ENCODE measurements at regions of chr7 and their contacts with region 1.

Region 1: DNA sequence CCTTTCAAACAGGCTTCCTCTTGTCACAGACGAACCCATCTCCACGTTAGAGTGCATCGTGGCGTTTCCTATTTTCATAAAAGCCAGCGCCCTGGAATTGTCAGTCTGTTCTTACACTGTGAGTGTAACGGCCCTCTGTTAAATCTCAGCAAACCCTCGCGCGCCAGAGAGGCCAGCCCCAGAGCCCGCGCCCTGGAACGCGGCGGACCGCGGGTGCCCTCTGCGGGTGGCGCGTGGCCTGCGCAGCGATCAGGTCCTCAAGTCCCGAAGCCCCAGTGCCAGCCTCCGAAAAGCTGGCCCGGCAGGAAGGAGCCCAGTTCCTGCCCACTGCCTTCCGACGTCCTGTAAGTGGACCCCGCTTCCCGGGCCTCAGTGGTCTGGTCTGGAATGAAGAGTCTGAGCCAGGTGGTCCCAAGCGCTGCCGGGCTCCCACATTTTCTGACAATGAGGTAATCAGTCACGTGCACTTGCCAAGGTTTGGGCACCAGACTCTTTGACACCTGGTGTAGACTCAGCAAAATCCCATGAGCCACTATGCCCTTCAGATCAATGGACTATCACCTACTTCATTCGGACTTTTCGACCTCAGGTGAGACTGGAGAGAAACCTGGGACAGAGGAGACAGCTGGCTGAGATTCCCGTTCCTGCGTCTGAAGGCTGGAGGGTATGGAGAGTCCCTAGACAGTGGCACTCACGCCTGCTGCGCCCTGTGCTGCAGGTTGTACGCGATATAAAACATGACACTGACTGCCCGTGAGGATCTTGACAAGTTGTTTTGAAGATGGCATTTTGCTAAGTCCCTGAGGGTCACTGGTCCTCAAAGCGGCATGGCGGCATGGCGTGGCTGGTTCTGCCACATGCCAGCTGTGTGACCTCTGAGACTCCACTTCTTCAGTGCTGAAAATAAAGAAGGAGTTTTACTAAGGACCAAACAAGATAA is 109.4 kb upstream of the LANCL2 start:
- DNase-seq: peak; percentile 76
- H3K4me3 ChIP-seq: peak overlapping the region; percentile 23 to 75 (median 39)
- H3K27ac ChIP-seq: no peak overlapping the region
- H3K4me1 ChIP-seq: peaks cover 9% of the 10 kb centered on the region
- H3K27me3 ChIP-seq: peaks cover 44 to 53% of the 10 kb centered on the region in 2 experiments
- CTCF ChIP-seq: peak; percentile 92 to 97
- POLR2A ChIP-seq: no peak

Region 2: GRCh38 chr7:54798569-54798968 is 457.2 kb before region 1 on chr7:
- CTCF ChIA-PET with region 1: interaction called, 17 read pairs
- POLR2A ChIA-PET with region 1: no interaction called
- dilution Hi-C with region 1: no loop called
- intact Hi-C with region 1: no loop called
- DNase-seq: no peak
- H3K4me3 ChIP-seq: no peak overlapping the region
- H3K27ac ChIP-seq: no peak overlapping the region
- H3K4me1 ChIP-seq: no peaks in the 10 kb centered on the region
- H3K27me3 ChIP-seq: peaks cover 13 to 43% of the 10 kb centered on the region in 2 experiments
- CTCF ChIP-seq: no peak
- POLR2A ChIP-seq: no peak

Region 3: DNA sequence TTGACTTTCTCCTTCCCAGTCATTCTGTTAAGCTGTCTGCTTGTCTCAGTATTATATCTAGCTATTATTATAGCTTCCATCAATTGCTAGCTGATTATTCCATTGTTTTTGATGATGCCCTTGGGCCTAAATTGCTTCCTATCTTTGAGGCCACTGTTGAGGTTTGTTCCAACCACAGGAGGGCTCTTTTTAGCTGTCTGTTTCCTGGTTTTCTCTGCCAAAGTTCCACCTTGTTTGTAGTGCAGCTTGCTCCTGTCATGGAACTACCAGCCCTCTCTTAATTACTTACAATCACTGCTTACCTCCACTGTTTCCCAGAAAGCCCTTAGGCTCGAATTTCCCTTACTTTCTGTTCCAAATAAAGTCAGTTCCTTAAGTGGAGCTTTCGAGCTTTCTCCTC is 378.1 kb before region 1 on chr7:
- CTCF ChIA-PET with region 1: interaction called, 14 read pairs
- POLR2A ChIA-PET with region 1: no interaction called
- dilution Hi-C with region 1: no loop called
- intact Hi-C with region 1: no loop called
- DNase-seq: no peak
- H3K4me3 ChIP-seq: no peak overlapping the region
- H3K27ac ChIP-seq: no peak overlapping the region
- H3K4me1 ChIP-seq: no peaks in the 10 kb centered on the region
- H3K27me3 ChIP-seq: peaks cover 1 to 5% of the 10 kb centered on the region in 2 experiments
- CTCF ChIP-seq: no peak
- POLR2A ChIP-seq: no peak

Region 4: DNA sequence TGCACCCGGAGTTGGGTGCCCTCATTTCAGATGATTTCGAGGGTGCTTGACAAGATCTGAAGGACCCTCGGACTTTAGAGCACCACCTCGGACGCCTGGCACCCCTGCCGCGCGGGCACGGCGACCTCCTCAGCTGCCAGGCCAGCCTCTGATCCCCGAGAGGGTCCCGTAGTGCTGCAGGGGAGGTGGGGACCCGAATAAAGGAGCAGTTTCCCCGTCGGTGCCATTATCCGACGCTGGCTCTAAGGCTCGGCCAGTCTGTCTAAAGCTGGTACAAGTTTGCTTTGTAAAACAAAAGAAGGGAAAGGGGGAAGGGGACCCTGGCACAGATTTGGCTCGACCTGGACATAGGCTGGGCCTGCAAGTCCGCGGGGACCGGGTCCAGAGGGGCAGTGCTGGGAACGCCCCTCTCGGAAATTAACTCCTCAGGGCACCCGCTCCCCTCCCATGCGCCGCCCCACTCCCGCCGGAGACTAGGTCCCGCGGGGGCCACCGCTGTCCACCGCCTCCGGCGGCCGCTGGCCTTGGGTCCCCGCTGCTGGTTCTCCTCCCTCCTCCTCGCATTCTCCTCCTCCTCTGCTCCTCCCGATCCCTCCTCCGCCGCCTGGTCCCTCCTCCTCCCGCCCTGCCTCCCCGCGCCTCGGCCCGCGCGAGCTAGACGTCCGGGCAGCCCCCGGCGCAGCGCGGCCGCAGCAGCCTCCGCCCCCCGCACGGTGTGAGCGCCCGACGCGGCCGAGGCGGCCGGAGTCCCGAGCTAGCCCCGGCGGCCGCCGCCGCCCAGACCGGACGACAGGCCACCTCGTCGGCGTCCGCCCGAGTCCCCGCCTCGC is 237.2 kb before region 1 on chr7 and contains the start of gene EGFR:
- CTCF ChIA-PET with region 1: interaction called, 39 read pairs
- POLR2A ChIA-PET with region 1: no interaction called
- dilution Hi-C with region 1: no loop called
- intact Hi-C with region 1: loop called (anchors 1 kb)
- DNase-seq: peak; percentile 64
- H3K4me3 ChIP-seq: peak within 1 kb of the TSS; percentile 69 to 84 (median 74)
- H3K27ac ChIP-seq: peak within 1 kb of the TSS; percentile 40
- H3K4me1 ChIP-seq: peaks cover 10% of the 10 kb centered on the region
- H3K27me3 ChIP-seq: peaks cover 17 to 29% of the 10 kb centered on the region in 2 experiments
- CTCF ChIP-seq: no peak
- POLR2A ChIP-seq: no peak
- total RNA-seq, gene EGFR: 4.1 and 5.0 TPM in 2 replicates

Region 5: DNA sequence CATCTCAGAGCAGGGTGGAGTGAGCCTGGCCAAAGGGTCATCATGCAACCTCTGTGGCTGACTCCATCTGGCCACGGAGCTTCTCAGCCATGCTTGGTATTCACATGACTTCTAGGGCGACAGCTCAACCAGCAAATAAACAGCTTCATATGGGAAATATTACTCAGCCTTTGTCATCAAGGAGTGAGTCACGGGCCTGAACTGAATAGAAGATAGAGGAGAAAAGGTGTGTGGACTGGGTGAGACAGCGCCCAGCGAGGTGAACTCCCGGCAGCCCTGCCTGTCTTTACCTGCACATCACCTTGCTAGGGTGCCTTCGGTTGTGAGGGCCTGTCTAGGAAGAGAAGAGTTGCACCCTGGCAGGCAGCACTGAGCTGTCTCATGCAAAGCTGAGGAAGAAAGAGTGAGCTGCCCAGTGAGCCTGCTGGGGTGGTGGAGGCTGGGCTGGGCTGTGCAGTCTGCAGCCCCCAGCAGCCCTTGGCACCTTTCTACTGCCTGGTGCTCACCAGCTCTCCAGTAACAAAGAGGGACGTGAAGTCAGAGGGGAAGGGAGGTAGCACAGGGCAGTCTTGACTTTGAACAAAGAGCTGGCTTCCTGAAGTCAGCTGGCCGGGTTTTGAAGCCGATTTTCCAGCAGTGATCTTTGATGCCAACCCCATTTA is 122.7 kb before region 1 on chr7:
- CTCF ChIA-PET with region 1: interaction called, 26 read pairs
- POLR2A ChIA-PET with region 1: no interaction called
- dilution Hi-C with region 1: no loop called
- intact Hi-C with region 1: loop called (anchors 2 kb)
- DNase-seq: peak; percentile 95
- H3K4me3 ChIP-seq: no peak overlapping the region
- H3K27ac ChIP-seq: peak overlapping the region; percentile 97
- H3K4me1 ChIP-seq: peaks cover 42% of the 10 kb centered on the region
- H3K27me3 ChIP-seq: no peaks in the 10 kb centered on the region
- CTCF ChIP-seq: no peak
- POLR2A ChIP-seq: no peak

Region 6: GRCh38 chr7:55265836-55266642 is 10.3 kb after region 1 on chr7:
- CTCF ChIA-PET with region 1: interaction called, 32 read pairs
- POLR2A ChIA-PET with region 1: no interaction called
- dilution Hi-C with region 1: no loop called
- intact Hi-C with region 1: no loop called
- DNase-seq: no peak
- H3K4me3 ChIP-seq: no peak overlapping the region
- H3K27ac ChIP-seq: no peak overlapping the region
- H3K4me1 ChIP-seq: no peaks in the 10 kb centered on the region
- H3K27me3 ChIP-seq: peaks cover 8 to 20% of the 10 kb centered on the region in 2 experiments
- CTCF ChIP-seq: no peak
- POLR2A ChIP-seq: no peak

Region 7: DNA sequence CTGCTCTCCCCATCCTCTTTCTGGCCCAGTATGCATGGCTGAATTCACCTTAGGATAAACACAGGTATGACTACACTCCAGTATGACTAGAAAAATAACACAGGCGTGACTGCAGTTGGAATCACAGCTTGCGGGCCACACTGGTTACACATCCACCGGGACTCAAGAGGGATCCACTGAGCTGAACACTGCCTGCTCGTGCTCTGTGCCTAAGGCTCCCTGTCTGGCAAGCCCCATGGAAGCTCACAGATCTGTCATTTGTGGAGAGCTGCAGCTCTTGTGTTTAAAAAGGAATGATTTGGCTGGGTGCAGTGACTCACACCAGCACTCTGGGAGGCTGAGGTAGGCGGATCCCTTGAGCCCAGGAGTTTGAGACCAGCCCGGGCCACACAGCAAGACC is 289.7 kb after region 1 on chr7:
- CTCF ChIA-PET with region 1: no interaction called
- POLR2A ChIA-PET with region 1: no interaction called
- dilution Hi-C with region 1: no loop called
- intact Hi-C with region 1: no loop called
- DNase-seq: no peak
- H3K4me3 ChIP-seq: no peak overlapping the region
- H3K27ac ChIP-seq: no peak overlapping the region
- H3K4me1 ChIP-seq: peaks cover 34% of the 10 kb centered on the region
- H3K27me3 ChIP-seq: no peaks in the 10 kb centered on the region
- CTCF ChIP-seq: no peak
- POLR2A ChIP-seq: no peak

Region 8: DNA sequence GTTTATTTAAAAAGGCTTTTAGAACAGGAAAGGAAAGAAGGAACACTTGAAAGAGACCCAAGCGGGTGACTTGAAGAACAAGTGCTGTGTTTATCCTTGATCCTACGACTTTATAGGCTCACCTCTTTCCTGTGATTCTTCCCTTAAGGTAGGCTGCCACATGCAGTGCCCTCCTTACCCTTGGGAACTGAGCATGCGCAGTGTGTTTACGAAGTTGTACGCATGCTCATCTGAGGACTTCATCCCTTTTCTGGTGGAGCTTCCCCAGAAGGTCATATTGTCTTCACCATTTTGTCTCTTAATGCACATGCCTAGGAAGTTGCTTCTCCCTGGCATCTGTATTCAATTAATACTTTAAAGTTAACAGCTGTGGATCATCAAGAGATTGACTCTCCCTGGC is 366.5 kb after region 1 on chr7:
- CTCF ChIA-PET with region 1: no interaction called
- POLR2A ChIA-PET with region 1: no interaction called
- dilution Hi-C with region 1: no loop called
- intact Hi-C with region 1: no loop called
- DNase-seq: no peak
- H3K4me3 ChIP-seq: no peak overlapping the region
- H3K27ac ChIP-seq: no peak overlapping the region
- H3K4me1 ChIP-seq: no peaks in the 10 kb centered on the region
- H3K27me3 ChIP-seq: no peaks in the 10 kb centered on the region
- CTCF ChIP-seq: no peak
- POLR2A ChIP-seq: no peak